Naive thymus-derived CD4-positive, alpha-beta T cell (primary cell): ENCODE measurements at regions of chr6 and their contacts with region 1.

Region 1: GRCh38 chr6:41318654-41319565 is 16.5 kb upstream of the NCR2 start:
- DNase-seq: peak; percentile 69 to 88 (median 83)
- ATAC-seq: peak; percentile 100
- H3K4me3 ChIP-seq: peak overlapping the region; percentile 6
- H3K4me3 Mint-ChIP-seq: peak overlapping the region; percentile 55 to 80 (median 74)
- H3K27ac ChIP-seq: no peak overlapping the region
- H3K27ac Mint-ChIP-seq: peak overlapping the region in 7 of 9 donors; percentile 39 to 79 (median 70)
- H3K4me1 ChIP-seq: peaks cover 3 to 9% of the 10 kb centered on the region in 2 donors
- H3K4me1 Mint-ChIP-seq: peaks cover 0 to 24% (median 15%) of the 10 kb centered on the region in 7 donors
- H3K27me3 ChIP-seq: peaks cover 0 to 3% of the 10 kb centered on the region in 2 donors
- H3K27me3 Mint-ChIP-seq: peaks cover 0 to 48% (median 10%) of the 10 kb centered on the region in 5 donors

Region 2: GRCh38 chr6:39361657-39362486 is 1957.0 kb before region 1 on chr6:
- CTCF ChIA-PET with region 1: no interaction called
- POLR2A ChIA-PET with region 1: no interaction called
- intact Hi-C with region 1: loop called in 1 of 2 experiments (anchors 5 kb)
- DNase-seq: peak in 7 of 9 donors; percentile 20 to 49 (median 34)
- ATAC-seq: peak; percentile 80
- H3K4me3 ChIP-seq: no peak overlapping the region
- H3K4me3 Mint-ChIP-seq: peak overlapping the region in 2 of 10 donors; percentile 48 to 53
- H3K27ac ChIP-seq: no peak overlapping the region
- H3K27ac Mint-ChIP-seq: no peak overlapping the region
- H3K4me1 ChIP-seq: no peaks in the 10 kb centered on the region
- H3K4me1 Mint-ChIP-seq: peaks cover 0 to 6% (median 0%) of the 10 kb centered on the region in 7 donors
- H3K27me3 ChIP-seq: no peaks in the 10 kb centered on the region
- H3K27me3 Mint-ChIP-seq: peaks cover 0 to 19% (median 3%) of the 10 kb centered on the region in 5 donors

Region 3: DNA sequence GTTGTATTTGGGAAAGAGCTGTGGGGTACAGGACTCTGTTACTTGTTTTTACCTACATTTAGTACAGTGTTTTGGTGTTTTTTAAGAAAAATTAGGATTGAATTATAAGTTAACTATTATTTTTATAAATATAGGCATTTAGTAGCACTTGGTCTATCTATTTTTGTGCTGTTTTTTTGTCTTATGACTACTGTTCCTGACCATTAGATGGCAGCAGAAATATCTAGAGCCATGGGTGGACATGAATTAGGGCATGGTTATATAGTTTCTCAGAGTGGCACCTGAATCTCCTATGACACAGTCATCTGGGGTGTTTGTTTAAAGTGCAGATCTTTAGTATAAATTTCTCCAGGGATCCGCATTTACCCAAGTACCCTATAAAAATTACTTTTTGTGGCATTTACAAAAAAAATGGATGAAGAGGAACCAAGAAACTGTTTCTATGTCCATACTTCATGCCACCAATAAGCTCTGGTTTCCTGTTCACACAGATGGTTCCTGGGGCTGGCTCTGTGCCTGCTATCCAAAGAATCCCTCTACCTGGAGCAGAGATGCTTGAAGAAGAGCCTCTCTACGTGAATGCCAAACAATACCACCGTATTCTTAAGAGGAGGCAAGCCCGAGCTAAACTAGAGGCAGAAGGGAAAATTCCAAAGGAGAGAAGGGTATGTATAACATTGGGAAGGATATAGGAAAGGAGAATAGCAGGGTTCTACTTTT is 226.3 kb before region 1 on chr6:
- CTCF ChIA-PET with region 1: no interaction called
- POLR2A ChIA-PET with region 1: no interaction called
- intact Hi-C with region 1: loop called in 1 of 2 experiments (anchors 1 kb)
- DNase-seq: no peak
- ATAC-seq: no peak
- H3K4me3 ChIP-seq: no peak overlapping the region
- H3K4me3 Mint-ChIP-seq: no peak overlapping the region
- H3K27ac ChIP-seq: no peak overlapping the region
- H3K27ac Mint-ChIP-seq: peak overlapping the region in 2 of 9 donors; percentile 54 to 62
- H3K4me1 ChIP-seq: no peaks in the 10 kb centered on the region
- H3K4me1 Mint-ChIP-seq: peaks cover 0 to 14% (median 5%) of the 10 kb centered on the region in 7 donors
- H3K27me3 ChIP-seq: no peaks in the 10 kb centered on the region
- H3K27me3 Mint-ChIP-seq: no peaks in the 10 kb centered on the region

Region 4: DNA sequence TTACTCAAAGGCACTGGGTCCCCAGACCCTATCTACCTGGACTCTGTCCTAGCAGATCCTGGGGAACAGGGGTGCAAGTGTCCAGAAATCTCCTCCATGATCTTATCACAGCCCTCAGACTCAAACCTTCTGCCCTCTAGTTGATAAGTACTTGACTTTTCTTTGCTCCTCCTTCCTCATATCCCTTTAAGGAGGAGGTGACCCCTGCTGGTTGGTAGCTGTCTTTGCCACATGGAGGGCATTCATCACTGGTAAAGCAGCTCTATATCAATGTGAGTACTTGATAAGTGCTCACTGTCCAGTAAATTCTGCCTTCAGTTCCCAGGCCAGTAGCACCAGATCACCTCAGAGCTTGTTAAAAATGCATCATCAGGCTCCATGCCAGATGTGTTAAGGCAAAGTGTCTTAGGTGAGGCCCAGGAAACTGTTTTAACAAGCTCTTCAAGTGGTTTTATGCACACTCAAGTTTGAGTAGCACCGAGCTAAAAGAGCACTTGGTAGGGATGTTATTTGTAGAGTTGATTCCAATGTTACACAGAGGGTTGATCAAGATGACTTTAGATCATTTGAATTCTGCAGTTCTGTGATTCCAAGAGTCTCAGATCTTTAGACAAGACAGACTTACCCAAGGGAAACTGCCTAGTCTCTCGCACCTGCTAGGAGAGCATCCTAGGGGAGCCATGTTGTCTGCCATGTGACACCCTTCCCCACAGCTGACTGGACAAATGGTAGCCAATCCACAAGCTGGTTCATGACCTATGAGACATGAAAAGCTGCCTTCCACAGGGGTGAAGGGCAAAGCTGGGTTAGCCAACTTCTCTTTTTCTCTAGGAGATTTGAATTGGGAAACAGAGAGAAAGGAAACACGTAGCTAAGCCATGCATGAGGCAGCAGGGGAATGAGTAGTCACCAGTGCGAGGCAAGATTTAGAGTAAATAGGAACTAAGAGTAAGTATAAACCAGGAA is 136.6 kb before region 1 on chr6:
- CTCF ChIA-PET with region 1: interaction called, 3 read pairs
- POLR2A ChIA-PET with region 1: no interaction called
- intact Hi-C with region 1: loop called (anchors 5 kb)
- DNase-seq: peak in 8 of 9 donors; percentile 34 to 68 (median 60)
- ATAC-seq: peak; percentile 85
- H3K4me3 ChIP-seq: no peak overlapping the region
- H3K4me3 Mint-ChIP-seq: no peak overlapping the region
- H3K27ac ChIP-seq: no peak overlapping the region
- H3K27ac Mint-ChIP-seq: peak overlapping the region in 5 of 9 donors; percentile 0 to 68 (median 5)
- H3K4me1 ChIP-seq: peaks cover 0 to 17% of the 10 kb centered on the region in 2 donors
- H3K4me1 Mint-ChIP-seq: peaks cover 20 to 43% (median 34%) of the 10 kb centered on the region in 7 donors
- H3K27me3 ChIP-seq: no peaks in the 10 kb centered on the region
- H3K27me3 Mint-ChIP-seq: peaks cover 0 to 10% (median 3%) of the 10 kb centered on the region in 5 donors

Region 5: GRCh38 chr6:41278699-41279405 is 40.1 kb before region 1 on chr6:
- CTCF ChIA-PET with region 1: interaction called, 8 read pairs
- POLR2A ChIA-PET with region 1: no interaction called
- intact Hi-C with region 1: loop called (anchors 1 kb)
- DNase-seq: peak in 8 of 9 donors; percentile 47 to 68 (median 62)
- ATAC-seq: peak; percentile 62
- H3K4me3 ChIP-seq: no peak overlapping the region
- H3K4me3 Mint-ChIP-seq: peak overlapping the region in 4 of 10 donors; percentile 11 to 53 (median 28)
- H3K27ac ChIP-seq: no peak overlapping the region
- H3K27ac Mint-ChIP-seq: peak overlapping the region in 1 of 9 donors; percentile 3
- H3K4me1 ChIP-seq: peaks cover 0 to 9% of the 10 kb centered on the region in 2 donors
- H3K4me1 Mint-ChIP-seq: peaks cover 11 to 22% (median 12%) of the 10 kb centered on the region in 7 donors
- H3K27me3 ChIP-seq: no peaks in the 10 kb centered on the region
- H3K27me3 Mint-ChIP-seq: peaks cover 0 to 23% (median 5%) of the 10 kb centered on the region in 5 donors

Region 6: DNA sequence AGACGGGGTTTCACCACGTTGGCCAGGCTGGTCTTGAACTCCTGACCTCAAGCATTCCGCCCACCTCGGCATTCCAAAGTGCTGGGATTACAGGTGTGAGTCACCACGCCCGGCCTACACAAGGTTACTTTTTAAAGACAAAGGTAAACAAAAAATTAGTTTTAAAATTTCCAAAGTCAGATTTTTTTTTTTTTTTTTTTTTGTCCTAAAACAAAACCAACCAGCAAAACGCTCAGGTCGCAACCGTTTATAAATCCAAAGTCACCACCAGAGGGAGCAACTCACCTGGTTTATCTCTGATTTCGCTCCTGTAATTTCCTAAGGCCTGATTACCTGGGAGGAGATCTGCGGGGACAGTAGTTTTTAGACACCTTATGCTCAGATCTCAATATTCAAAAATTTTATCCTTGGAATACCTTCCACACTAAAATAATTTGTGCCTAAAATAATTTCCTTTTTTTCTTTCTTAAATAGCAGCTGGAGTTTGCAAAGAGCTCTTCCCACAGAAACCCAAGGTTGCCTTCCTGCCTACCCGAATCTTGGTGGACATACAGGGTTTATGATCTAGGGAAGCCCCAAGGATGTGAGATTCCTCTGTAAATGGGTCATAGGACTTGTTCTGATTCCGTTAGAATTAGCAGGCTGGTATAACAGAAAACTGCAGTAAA is 12.6 kb before region 1 on chr6:
- CTCF ChIA-PET with region 1: interaction called, 39 read pairs
- POLR2A ChIA-PET with region 1: no interaction called
- intact Hi-C with region 1: loop called (anchors 1 kb)
- DNase-seq: peak in 7 of 9 donors; percentile 20 to 53 (median 35)
- ATAC-seq: no peak
- H3K4me3 ChIP-seq: no peak overlapping the region
- H3K4me3 Mint-ChIP-seq: no peak overlapping the region
- H3K27ac ChIP-seq: no peak overlapping the region
- H3K27ac Mint-ChIP-seq: no peak overlapping the region
- H3K4me1 ChIP-seq: no peaks in the 10 kb centered on the region
- H3K4me1 Mint-ChIP-seq: peaks cover 7 to 28% (median 20%) of the 10 kb centered on the region in 7 donors
- H3K27me3 ChIP-seq: no peaks in the 10 kb centered on the region
- H3K27me3 Mint-ChIP-seq: peaks cover 0 to 45% (median 0%) of the 10 kb centered on the region in 5 donors

Region 7: GRCh38 chr6:41367700-41368099 is 48.8 kb after region 1 on chr6:
- CTCF ChIA-PET with region 1: interaction called, 4 read pairs
- POLR2A ChIA-PET with region 1: no interaction called
- intact Hi-C with region 1: loop called in 1 of 2 experiments (anchors 1 kb)
- DNase-seq: peak in 1 of 9 donors; percentile 20
- ATAC-seq: no peak
- H3K4me3 ChIP-seq: no peak overlapping the region
- H3K4me3 Mint-ChIP-seq: no peak overlapping the region
- H3K27ac ChIP-seq: no peak overlapping the region
- H3K27ac Mint-ChIP-seq: no peak overlapping the region
- H3K4me1 ChIP-seq: peaks cover 7 to 9% of the 10 kb centered on the region in 2 donors
- H3K4me1 Mint-ChIP-seq: peaks cover 17 to 27% (median 22%) of the 10 kb centered on the region in 7 donors
- H3K27me3 ChIP-seq: peaks cover 4 to 8% of the 10 kb centered on the region in 2 donors
- H3K27me3 Mint-ChIP-seq: peaks cover 45 to 78% (median 58%) of the 10 kb centered on the region in 5 donors